Endothelial cell of umbilical vein (primary cell): ENCODE measurements at regions of chr7 and their contacts with region 1.

Region 1: DNA sequence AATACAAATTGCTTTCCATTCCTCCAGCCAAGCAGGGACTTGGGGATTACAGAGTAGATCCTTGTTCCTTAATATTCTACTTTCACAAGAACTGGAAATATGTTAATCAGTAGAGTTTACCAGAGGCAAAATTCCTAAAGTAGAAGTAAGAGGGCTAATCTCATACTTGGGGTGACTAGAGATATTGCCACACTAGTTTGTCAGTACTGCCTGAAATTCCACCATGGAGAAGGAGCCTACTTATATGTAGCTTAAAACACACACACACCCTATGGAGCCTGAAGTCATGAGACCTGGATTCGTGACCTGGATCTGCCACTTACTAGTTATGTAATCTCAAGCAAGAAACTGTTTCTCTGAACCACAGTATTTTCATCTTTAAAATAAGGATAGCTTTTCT is 33.9 kb downstream of the STRIP2 start:
- DNase-seq: no peak
- H3K4me3 ChIP-seq: no peak overlapping the region
- H3K27ac ChIP-seq: no peak overlapping the region
- H3K4me1 ChIP-seq: no peaks in the 10 kb centered on the region
- H3K27me3 ChIP-seq: no peaks in the 10 kb centered on the region
- CTCF ChIP-seq: no peak
- POLR2A ChIP-seq: no peak

Region 2: GRCh38 chr7:129298268-129298893 is 169.7 kb before region 1 on chr7:
- CTCF ChIA-PET with region 1: interaction called, 6 read pairs
- POLR2A ChIA-PET with region 1: interaction called, 3 read pairs
- dilution Hi-C with region 1: no loop called
- intact Hi-C with region 1: loop called (anchors 1 kb)
- DNase-seq: peak; percentile 66
- H3K4me3 ChIP-seq: no peak overlapping the region
- H3K27ac ChIP-seq: no peak overlapping the region
- H3K4me1 ChIP-seq: no peaks in the 10 kb centered on the region
- H3K27me3 ChIP-seq: no peaks in the 10 kb centered on the region
- CTCF ChIP-seq: peak; percentile 54 to 56
- POLR2A ChIP-seq: no peak

Region 3: GRCh38 chr7:129359638-129360037 is 108.4 kb before region 1 on chr7:
- CTCF ChIA-PET with region 1: interaction called, 11 read pairs
- POLR2A ChIA-PET with region 1: no interaction called
- dilution Hi-C with region 1: no loop called
- intact Hi-C with region 1: no loop called
- DNase-seq: no peak
- H3K4me3 ChIP-seq: no peak overlapping the region
- H3K27ac ChIP-seq: no peak overlapping the region
- H3K4me1 ChIP-seq: no peaks in the 10 kb centered on the region
- H3K27me3 ChIP-seq: no peaks in the 10 kb centered on the region
- CTCF ChIP-seq: no peak
- POLR2A ChIP-seq: no peak

Region 4: GRCh38 chr7:129433847-129434674 is 34.0 kb before region 1 on chr7 and contains the start of gene STRIP2:
- CTCF ChIA-PET with region 1: interaction called, 6 read pairs
- POLR2A ChIA-PET with region 1: interaction called, 3 read pairs
- dilution Hi-C with region 1: no loop called
- intact Hi-C with region 1: loop called (anchors 2 kb)
- DNase-seq: peak; percentile 92
- H3K4me3 ChIP-seq: peak within 1 kb of the TSS; percentile 66 to 93 (median 90)
- H3K27ac ChIP-seq: peak within 1 kb of the TSS; percentile 54
- H3K4me1 ChIP-seq: peaks cover 21% of the 10 kb centered on the region
- H3K27me3 ChIP-seq: peaks cover 2 to 5% of the 10 kb centered on the region in 2 experiments
- CTCF ChIP-seq: peak in 1 of 2 donors; percentile 5
- POLR2A ChIP-seq: peak; percentile 86
- total RNA-seq, gene STRIP2: 8.8 and 10.0 TPM in 2 replicates